ENCODE measurements at regions of chr14 and their contacts with region 1.

Region 1: DNA sequence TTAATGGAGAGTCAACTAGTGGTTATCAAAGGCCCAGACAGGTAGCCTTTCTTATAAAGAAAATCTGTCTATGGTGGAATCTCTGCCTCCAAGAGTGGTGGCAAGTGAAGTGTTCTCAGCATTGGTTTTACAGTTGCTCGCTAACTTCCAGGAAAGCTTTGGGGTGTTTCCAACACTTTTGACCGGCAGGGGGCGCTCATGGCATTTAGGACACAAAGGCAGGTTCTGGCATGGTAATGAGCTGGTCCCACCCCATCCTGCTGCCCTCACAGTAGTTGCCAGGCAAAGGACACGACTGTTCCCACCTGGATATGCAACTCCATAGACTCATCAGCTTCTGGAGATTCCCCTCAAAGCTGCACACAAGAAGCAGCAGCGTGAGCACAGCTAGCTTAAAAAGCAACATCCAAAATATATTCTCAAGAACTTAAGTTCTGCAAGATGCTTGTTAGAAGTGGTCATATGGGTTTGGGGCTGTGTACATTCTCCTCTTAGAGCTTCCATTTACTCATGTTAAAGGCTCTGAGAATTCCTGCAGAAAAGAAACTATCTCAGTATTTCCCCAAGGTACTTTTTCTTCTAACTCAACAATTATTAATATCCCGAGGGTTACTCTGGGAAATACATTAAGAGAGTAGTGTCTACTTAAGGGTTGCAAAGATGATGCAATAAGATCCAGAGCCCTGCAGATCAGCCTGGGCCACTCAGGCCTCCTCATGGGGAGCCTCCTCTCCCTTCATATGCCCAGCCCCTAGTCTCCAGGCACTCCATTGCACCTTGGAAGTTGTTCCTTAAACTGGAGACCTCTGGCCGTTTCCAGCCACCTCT is 14.8 kb downstream of the PROX2 start:
- DNase-seq: peak; percentile 73
- H3K27ac ChIP-seq: no peak overlapping the region
- CTCF ChIP-seq: peak; percentile 80

Region 2: DNA sequence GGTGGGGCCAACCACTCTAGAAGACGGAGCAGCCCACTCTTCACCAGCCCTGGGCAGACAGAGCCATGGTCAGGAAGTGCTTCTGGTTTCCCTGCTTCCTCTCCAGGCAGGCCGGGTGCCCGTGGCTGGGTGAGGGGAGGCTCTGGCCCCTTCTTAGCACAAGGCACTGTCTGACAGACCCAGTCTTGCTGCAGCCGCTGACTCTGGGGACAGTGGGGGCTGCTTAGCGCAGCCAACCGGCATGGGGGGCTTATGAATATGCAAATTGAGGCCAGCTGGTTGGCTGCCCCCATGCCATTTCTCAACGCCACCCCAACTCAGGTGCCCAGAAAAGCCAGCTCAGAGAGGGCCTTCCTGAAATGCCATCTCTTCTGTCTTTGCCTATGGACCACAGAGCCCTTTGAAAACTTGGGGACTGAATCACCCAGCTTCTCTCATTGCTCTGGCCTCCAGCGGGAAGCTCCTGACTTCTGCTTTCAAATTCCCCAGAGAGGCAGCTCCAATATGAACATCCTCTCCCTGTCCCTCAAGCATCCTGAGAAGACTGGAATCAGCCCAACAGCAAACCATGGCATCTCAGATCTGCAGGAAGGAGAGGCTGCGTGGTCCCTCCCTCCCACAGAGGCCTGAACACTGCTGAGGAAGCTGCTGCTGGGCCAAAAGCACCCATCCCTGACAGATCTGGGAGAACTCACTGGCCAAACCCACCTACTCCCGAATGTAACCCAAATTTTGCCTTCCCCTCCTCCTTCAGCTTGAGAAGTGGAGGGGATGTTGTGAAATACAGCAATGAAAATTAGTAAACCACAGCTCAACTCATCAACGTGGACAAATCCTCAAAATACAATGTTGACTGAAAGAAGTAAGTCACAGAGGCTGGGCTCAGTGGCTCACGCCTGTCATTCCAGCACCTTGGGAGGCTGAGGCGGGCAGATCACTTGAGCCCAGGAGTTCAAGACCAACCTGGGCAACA is 15.1 kb after region 1 on chr14 and contains the start of gene PROX2:
- CTCF ChIA-PET with region 1: interaction called, 10 read pairs
- POLR2A ChIA-PET with region 1: no interaction called
- DNase-seq: no peak
- H3K27ac ChIP-seq: no peak within 1 kb of the TSS
- CTCF ChIP-seq: no peak

Region 3: DNA sequence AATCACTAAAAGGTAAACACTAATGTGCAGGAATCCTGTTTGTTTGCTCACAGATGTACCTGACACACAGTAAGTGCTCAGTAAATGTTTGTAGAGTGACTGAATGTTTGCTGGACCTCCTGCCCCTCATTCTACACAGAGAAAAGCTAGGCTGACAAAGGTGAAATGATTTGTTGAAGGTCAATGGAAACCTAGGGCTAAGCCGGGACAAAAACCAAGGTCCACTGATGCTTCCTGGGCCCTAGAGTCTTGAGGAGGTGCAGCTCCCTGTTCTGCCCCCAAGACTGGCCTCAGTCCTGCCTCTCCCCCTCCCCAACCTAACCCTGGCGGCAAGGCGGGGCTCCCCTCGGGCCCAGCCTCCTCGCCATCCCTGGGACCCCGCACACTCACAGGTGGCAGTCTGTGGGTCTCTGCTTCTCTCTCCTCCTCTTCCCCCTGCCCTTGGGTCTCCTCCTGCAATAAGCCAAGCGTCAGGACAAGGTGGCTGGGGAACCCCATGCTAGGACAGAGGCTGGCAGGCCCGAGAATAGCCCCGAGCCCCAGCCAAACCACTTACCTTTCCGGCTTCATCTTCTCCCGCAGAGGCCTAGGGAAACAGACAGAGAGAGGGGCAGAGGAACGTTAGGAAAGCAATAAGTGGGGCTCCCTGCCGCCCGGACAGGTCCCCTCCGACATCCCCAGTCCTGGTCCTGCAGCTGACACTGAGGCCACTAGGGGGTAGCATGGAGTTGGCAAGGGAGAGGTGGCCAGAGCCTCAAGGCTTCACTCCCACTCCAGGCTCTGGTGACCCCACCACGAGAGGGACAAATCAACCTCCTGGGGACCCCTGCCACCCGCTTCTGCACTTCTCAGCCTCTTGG is 84.9 kb after region 1 on chr14:
- CTCF ChIA-PET with region 1: interaction called, 13 read pairs
- POLR2A ChIA-PET with region 1: no interaction called
- DNase-seq: peak; percentile 72
- H3K27ac ChIP-seq: peak overlapping the region; percentile 74
- CTCF ChIP-seq: peak; percentile 89

Region 4: GRCh38 chr14:75088574-75089373 is 227.7 kb after region 1 on chr14:
- CTCF ChIA-PET with region 1: interaction called, 21 read pairs
- POLR2A ChIA-PET with region 1: no interaction called
- DNase-seq: peak; percentile 54
- H3K27ac ChIP-seq: no peak overlapping the region
- CTCF ChIP-seq: peak; percentile 79